CD4-positive, alpha-beta memory T cell (primary cell): ENCODE measurements at regions of chr1 and their contacts with region 1.

Region 1: GRCh38 chr1:39816415-39817090 is 27.9 kb upstream of the BMP8B start:
- DNase-seq: peak; percentile 25 to 64 (median 51)
- H3K4me3 ChIP-seq: peak overlapping the region in 1 of 2 donors; percentile 36
- H3K4me3 Mint-ChIP-seq: peak overlapping the region; percentile 53 to 91 (median 83)
- H3K27ac ChIP-seq: no peak overlapping the region
- H3K27ac Mint-ChIP-seq: peak overlapping the region in 4 of 7 donors; percentile 19 to 93 (median 64)
- H3K4me1 ChIP-seq: peaks cover 8% of the 10 kb centered on the region
- H3K4me1 Mint-ChIP-seq: peaks cover 2 to 13% (median 9%) of the 10 kb centered on the region in 4 donors
- H3K27me3 ChIP-seq: no peaks in the 10 kb centered on the region
- H3K27me3 Mint-ChIP-seq: peaks cover 9 to 16% of the 10 kb centered on the region in 2 donors

Region 2: DNA sequence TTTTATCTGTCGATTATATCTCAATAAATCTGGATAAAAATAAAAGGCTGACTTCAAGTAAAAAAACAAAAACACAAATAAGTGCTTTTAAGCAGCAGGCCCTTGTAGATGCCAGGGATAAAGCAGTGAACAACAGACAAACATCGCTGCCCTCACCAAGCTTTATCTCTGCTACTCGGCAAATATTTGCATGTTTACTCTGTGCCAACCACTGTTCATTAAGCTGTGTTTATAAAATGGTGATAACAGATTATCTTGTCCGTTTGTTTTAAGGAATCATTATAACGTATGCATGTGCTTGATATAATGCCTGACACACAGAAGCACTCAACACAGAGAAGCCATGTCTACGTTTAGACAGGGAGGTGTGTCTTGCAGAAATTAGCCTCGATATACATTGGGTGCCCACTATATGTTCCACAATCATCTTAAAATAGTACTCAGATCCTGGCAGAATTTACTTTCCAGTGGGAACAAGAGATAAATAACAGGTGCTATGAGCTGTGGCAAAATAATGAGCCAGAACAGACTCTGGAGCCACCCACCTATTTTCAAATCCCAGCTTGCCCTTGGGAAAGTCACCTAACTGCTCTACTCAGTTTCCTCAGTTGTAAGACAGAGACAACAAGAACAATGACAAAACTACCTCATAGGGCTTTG is 19.5 kb after region 1 on chr1:
- CTCF ChIA-PET with region 1: interaction called, 10 read pairs
- POLR2A ChIA-PET with region 1: no interaction called
- intact Hi-C with region 1: no loop called
- DNase-seq: no peak
- H3K4me3 ChIP-seq: no peak overlapping the region
- H3K4me3 Mint-ChIP-seq: no peak overlapping the region
- H3K27ac ChIP-seq: no peak overlapping the region
- H3K27ac Mint-ChIP-seq: no peak overlapping the region
- H3K4me1 ChIP-seq: peaks cover 2% of the 10 kb centered on the region
- H3K4me1 Mint-ChIP-seq: peaks cover 0 to 8% (median 4%) of the 10 kb centered on the region in 4 donors
- H3K27me3 ChIP-seq: no peaks in the 10 kb centered on the region
- H3K27me3 Mint-ChIP-seq: no peaks in the 10 kb centered on the region

Region 3: DNA sequence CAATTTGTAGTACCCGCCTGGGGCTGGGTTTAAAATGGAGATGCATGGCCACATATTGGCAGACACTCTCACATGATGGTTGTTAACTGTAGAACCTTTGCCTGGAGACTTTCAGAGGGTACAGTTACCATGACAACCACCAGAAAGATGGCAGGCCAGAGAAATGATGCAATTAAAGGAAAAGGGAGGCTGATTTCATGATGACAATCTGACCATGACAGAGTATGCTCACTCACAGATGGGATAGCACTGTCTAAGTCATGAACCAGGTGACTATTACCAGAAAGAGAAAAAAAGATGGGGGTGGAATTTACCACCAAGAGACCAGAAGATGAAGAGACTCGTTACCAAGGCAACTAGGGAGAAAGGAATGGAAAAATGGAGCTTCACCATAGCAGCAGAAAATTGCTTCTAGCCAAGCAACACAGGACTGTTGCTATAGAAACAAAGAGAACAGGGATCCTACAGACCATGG is 70.2 kb after region 1 on chr1:
- CTCF ChIA-PET with region 1: interaction called, 7 read pairs
- POLR2A ChIA-PET with region 1: interaction called, 3 read pairs
- intact Hi-C with region 1: loop called (anchors 1 kb)
- DNase-seq: no peak
- H3K4me3 ChIP-seq: no peak overlapping the region
- H3K4me3 Mint-ChIP-seq: no peak overlapping the region
- H3K27ac ChIP-seq: no peak overlapping the region
- H3K27ac Mint-ChIP-seq: no peak overlapping the region
- H3K4me1 ChIP-seq: peaks cover 12% of the 10 kb centered on the region
- H3K4me1 Mint-ChIP-seq: peaks cover 10 to 18% (median 15%) of the 10 kb centered on the region in 4 donors
- H3K27me3 ChIP-seq: no peaks in the 10 kb centered on the region
- H3K27me3 Mint-ChIP-seq: peaks cover 1 to 4% of the 10 kb centered on the region in 2 donors

Region 4: GRCh38 chr1:39973503-39974135 is 157.1 kb after region 1 on chr1:
- CTCF ChIA-PET with region 1: interaction called, 49 read pairs
- POLR2A ChIA-PET with region 1: no interaction called
- intact Hi-C with region 1: no loop called
- DNase-seq: peak; percentile 65 to 68 (median 66)
- H3K4me3 ChIP-seq: no peak overlapping the region
- H3K4me3 Mint-ChIP-seq: peak overlapping the region in 1 of 8 donors; percentile 43
- H3K27ac ChIP-seq: no peak overlapping the region
- H3K27ac Mint-ChIP-seq: peak overlapping the region in 1 of 7 donors; percentile 43
- H3K4me1 ChIP-seq: no peaks in the 10 kb centered on the region
- H3K4me1 Mint-ChIP-seq: peaks cover 5 to 7% (median 6%) of the 10 kb centered on the region in 4 donors
- H3K27me3 ChIP-seq: no peaks in the 10 kb centered on the region
- H3K27me3 Mint-ChIP-seq: no peaks in the 10 kb centered on the region